ENCODE measurements at regions of chr13 and their contacts with region 1.

Region 1: GRCh38 chr13:99501184-99501847 is at the start of gene TM9SF2:
- DNase-seq: peak; percentile 99
- H3K4me3 Mint-ChIP-seq: peak within 1 kb of the TSS; percentile 94
- H3K27ac Mint-ChIP-seq: peak within 1 kb of the TSS; percentile 96
- H3K4me1 Mint-ChIP-seq: peaks cover 60% of the 10 kb centered on the region
- H3K27me3 Mint-ChIP-seq: no peaks in the 10 kb centered on the region
- total RNA-seq, gene TM9SF2: 57.8 and 60.2 TPM in 2 replicates

Region 2: GRCh38 chr13:97975848-97976609 is 1525.3 kb before region 1 on chr13:
- intact Hi-C with region 1: loop called (anchors 5 kb)
- DNase-seq: peak; percentile 97
- H3K4me3 Mint-ChIP-seq: peak overlapping the region; percentile 92
- H3K27ac Mint-ChIP-seq: peak overlapping the region; percentile 99
- H3K4me1 Mint-ChIP-seq: peaks cover 24% of the 10 kb centered on the region
- H3K27me3 Mint-ChIP-seq: peaks cover 10% of the 10 kb centered on the region

Region 3: DNA sequence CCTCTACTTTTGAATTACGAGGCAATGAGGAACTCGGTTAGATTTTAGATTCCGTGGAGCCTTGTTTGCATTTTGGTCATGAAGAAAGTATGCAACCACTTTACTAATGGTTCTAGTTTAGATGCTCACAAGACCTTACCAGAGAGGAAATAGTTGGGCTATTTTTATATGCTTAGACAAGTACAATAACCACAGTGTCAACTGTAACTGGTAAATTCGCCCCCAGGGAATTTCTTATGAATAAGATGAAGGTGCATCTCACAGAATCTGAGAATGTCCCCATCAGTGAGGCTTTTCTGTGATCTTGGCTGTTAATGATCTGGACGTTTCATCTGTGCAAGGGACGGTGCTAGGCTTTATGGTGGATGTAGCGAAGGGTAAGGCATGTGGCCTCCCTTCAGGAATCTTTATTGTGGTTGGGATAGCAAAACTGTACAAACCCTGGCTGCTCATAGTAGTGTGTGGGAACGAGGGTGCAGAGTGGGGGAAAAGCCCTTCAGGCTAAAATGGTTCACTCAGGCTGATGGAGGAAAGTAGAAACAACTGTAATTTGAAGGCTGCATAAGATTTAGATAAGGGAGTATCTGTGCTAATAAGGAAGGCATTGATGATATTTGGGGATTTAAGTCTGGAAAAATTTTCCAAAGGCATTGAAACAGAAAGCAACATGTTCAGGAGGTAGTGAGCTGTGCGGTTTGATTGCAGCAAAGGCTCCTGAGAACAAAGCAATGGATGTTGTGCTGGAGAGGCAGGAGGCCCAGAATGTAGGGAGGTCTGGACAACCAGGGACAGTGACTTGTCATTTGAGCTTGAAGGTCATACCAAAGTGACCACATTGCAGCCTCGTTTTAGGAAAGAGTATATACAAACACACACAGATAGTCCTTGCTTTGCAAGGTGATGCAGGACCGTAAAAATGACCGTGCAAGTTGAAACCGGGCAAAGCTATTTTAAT is 272.3 kb before region 1 on chr13:
- intact Hi-C with region 1: no loop called
- DNase-seq: peak; percentile 65
- H3K4me3 Mint-ChIP-seq: peak overlapping the region; percentile 79
- H3K27ac Mint-ChIP-seq: peak overlapping the region; percentile 86
- H3K4me1 Mint-ChIP-seq: peaks cover 50% of the 10 kb centered on the region
- H3K27me3 Mint-ChIP-seq: no peaks in the 10 kb centered on the region

Region 4: GRCh38 chr13:99258210-99258860 is 243.0 kb before region 1 on chr13 and contains the start of gene GPR18:
- intact Hi-C with region 1: loop called (anchors 5 kb)
- DNase-seq: peak; percentile 80
- H3K4me3 Mint-ChIP-seq: peak within 1 kb of the TSS; percentile 92
- H3K27ac Mint-ChIP-seq: peak within 1 kb of the TSS; percentile 96
- H3K4me1 Mint-ChIP-seq: peaks cover 51% of the 10 kb centered on the region
- H3K27me3 Mint-ChIP-seq: no peaks in the 10 kb centered on the region
- total RNA-seq, gene GPR18: 5.9 and 6.3 TPM in 2 replicates

Region 5: DNA sequence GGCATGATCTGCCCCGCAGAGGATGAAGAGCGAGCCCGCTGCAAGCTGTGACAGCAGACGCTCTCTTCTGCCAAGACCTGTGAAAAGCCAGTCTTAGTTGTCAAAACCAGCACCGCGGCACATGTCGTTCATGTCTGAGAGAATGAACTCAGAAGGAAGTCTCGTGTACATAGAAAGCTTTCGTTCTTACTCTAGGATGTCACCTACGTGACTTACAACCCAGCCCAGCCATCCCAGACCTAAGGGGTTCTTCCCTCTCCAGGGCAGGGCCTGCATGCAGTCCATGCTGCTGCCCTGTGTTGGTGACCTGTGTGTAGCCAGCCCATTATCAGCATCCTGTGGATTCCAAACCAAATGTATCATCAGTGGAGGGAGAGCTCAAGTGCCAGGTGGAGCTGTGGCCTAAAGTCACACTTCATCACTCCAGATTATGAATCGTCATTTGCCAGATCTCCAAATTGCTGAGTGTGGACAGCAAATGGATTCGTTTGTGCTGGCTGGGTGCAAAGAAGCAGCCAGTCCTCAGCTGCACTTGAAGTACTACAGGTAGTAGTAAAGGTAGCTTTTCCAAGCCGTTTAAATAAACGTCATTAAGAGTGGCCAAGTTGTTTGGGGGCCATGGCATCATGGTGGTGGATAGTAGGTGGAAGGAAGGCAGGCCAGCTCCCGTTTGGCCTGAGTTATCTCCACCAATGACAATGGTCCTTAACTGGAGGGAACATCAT is 120.2 kb before region 1 on chr13:
- intact Hi-C with region 1: loop called (anchors 5 kb)
- DNase-seq: peak; percentile 88
- H3K4me3 Mint-ChIP-seq: peak overlapping the region; percentile 56
- H3K27ac Mint-ChIP-seq: peak overlapping the region; percentile 88
- H3K4me1 Mint-ChIP-seq: peaks cover 65% of the 10 kb centered on the region
- H3K27me3 Mint-ChIP-seq: no peaks in the 10 kb centered on the region

Region 6: DNA sequence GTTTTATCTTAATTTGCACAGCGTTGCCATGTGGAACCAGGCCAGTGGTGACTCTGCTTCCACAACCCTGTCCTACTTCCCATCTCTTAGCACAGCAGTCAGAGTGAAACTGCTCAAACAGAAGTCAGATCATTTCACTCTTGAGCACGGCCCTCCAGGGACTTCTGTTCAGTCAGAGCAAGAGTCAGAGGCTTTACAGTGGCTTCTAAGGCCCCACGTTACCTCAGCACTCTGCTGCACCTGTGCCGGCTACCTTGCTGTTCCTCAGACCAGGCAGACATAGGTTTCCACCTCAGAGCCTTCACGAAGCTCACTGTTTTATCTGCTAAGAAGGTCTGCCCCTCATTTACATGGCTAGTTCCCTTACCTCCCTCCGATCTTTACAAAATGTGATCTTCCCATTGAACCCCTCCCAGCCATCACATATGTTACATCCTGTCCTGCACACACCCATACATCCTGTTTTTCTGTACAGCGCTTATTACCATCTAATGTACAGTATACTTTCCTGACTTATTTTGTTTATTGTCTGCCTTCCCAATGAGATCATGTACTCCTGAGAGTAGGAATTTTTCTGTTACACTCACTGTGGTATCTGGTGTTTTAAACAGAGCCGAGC is 41.6 kb after region 1 on chr13:
- intact Hi-C with region 1: loop called (anchors 1 kb)
- DNase-seq: peak; percentile 83
- H3K4me3 Mint-ChIP-seq: peak overlapping the region; percentile 39
- H3K27ac Mint-ChIP-seq: peak overlapping the region; percentile 23
- H3K4me1 Mint-ChIP-seq: peaks cover 30% of the 10 kb centered on the region
- H3K27me3 Mint-ChIP-seq: no peaks in the 10 kb centered on the region

Region 7: DNA sequence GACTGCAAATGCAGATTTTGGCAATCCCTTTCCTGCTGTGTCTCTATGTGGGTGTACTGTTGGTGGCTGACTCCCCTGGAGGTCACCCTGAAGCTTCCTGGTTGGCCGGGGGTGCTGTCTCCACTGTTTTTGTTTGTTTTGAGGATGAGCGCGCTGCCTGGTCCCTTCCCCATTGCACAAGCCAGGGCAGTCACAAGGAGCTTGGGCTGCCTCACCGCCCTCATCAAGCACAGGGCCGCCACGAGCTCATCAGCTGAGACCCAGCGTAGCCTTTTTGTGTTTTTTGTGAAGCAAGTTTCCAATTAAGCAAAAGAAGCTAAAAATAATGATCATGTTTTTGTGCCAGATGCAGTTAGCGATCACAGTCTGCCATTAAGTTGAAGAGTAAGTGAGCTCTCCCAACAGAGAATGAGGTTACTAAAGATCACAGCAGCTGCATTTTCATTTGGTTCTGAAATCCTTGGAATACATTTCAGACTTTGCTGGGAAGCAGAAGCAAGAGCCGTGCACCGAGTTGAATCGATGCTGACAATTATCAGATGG is 1029.4 kb after region 1 on chr13:
- intact Hi-C with region 1: no loop called
- DNase-seq: no peak
- H3K4me3 Mint-ChIP-seq: no peak overlapping the region
- H3K27ac Mint-ChIP-seq: no peak overlapping the region
- H3K4me1 Mint-ChIP-seq: no peaks in the 10 kb centered on the region
- H3K27me3 Mint-ChIP-seq: no peaks in the 10 kb centered on the region

Region 8: GRCh38 chr13:100588331-100589177 is 1087.2 kb after region 1 on chr13 and contains the start of gene GGACT:
- intact Hi-C with region 1: loop called (anchors 10 kb)
- DNase-seq: peak; percentile 95
- H3K4me3 Mint-ChIP-seq: peak within 1 kb of the TSS; percentile 84
- H3K27ac Mint-ChIP-seq: peak within 1 kb of the TSS; percentile 96
- H3K4me1 Mint-ChIP-seq: peaks cover 44% of the 10 kb centered on the region
- H3K27me3 Mint-ChIP-seq: no peaks in the 10 kb centered on the region
- total RNA-seq, gene GGACT: 4.4 and 5.9 TPM in 2 replicates

Measured in activated CD4-positive, alpha-beta T cell treated with anti-CD3 and anti-CD28 coated beads, Interleukin-2, amount 10 ng/mL, durations not matched to agents 24 days and 14 days (primary cell).